ENCODE measurements at regions of chr10 and their contacts with region 1.

Region 1: GRCh38 chr10:25666276-25666675 is 267.8 kb upstream of the MYO3A start:
- DNase-seq: no peak
- ATAC-seq: no peak
- H3K4me3 ChIP-seq: no peak overlapping the region
- H3K4me3 Mint-ChIP-seq: no peak overlapping the region
- H3K27ac ChIP-seq: no peak overlapping the region
- H3K27ac Mint-ChIP-seq: no peak overlapping the region
- H3K4me1 ChIP-seq: no peaks in the 10 kb centered on the region
- H3K4me1 Mint-ChIP-seq: no peaks in the 10 kb centered on the region
- H3K27me3 ChIP-seq: no peaks in the 10 kb centered on the region
- H3K27me3 Mint-ChIP-seq: no peaks in the 10 kb centered on the region

Region 2: GRCh38 chr10:24920907-24921881 is 745.1 kb before region 1 on chr10:
- CTCF ChIA-PET with region 1: no interaction called
- POLR2A ChIA-PET with region 1: no interaction called
- DNase-seq: peak in 1 of 35 experiments; percentile 3
- ATAC-seq: peak in 2 of 4 experiments; percentile 51 to 53
- H3K4me3 ChIP-seq: no peak overlapping the region
- H3K4me3 Mint-ChIP-seq: no peak overlapping the region
- H3K27ac ChIP-seq: no peak overlapping the region
- H3K27ac Mint-ChIP-seq: peak overlapping the region; percentile 47 to 78
- H3K4me1 ChIP-seq: peaks cover 0 to 5% of the 10 kb centered on the region in 2 experiments
- H3K4me1 Mint-ChIP-seq: peaks cover 10 to 14% (median 14%) of the 10 kb centered on the region in 3 donors
- H3K27me3 ChIP-seq: no peaks in the 10 kb centered on the region
- H3K27me3 Mint-ChIP-seq: no peaks in the 10 kb centered on the region

Region 3: DNA sequence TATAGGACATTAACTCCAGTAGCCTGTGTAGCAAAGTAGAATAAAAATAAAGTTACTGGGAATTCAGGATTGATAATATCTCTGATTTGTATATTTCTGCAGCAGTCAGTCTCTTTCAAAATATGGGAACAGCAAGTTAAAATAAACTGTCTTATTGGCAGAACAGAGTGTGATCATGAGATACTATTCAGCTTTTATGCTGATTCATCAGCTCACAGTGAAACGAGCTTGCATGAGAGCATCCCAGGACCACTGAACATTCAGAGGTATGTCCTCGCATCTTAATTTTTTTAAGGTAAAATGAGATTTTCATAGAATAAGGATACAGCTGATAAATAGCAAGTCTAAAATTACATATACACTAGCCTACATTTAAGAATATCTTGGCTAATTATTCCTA is 14.7 kb before region 1 on chr10:
- CTCF ChIA-PET with region 1: interaction called in 1 of 2 experiments, 13 read pairs
- POLR2A ChIA-PET with region 1: no interaction called
- DNase-seq: no peak
- ATAC-seq: no peak
- H3K4me3 ChIP-seq: no peak overlapping the region
- H3K4me3 Mint-ChIP-seq: no peak overlapping the region
- H3K27ac ChIP-seq: no peak overlapping the region
- H3K27ac Mint-ChIP-seq: no peak overlapping the region
- H3K4me1 ChIP-seq: no peaks in the 10 kb centered on the region
- H3K4me1 Mint-ChIP-seq: no peaks in the 10 kb centered on the region
- H3K27me3 ChIP-seq: no peaks in the 10 kb centered on the region
- H3K27me3 Mint-ChIP-seq: no peaks in the 10 kb centered on the region

Measured in T-cell (primary cell).